ENCODE measurements at regions of chr9 and their contacts with region 1.

Region 1: GRCh38 chr9:11713077-11713476 is 980.1 kb upstream of the TYRP1 start:
- DNase-seq: no peak
- H3K4me3 ChIP-seq: no peak overlapping the region
- H3K27ac ChIP-seq: no peak overlapping the region
- H3K4me1 ChIP-seq: no peaks in the 10 kb centered on the region
- H3K27me3 ChIP-seq: no peaks in the 10 kb centered on the region
- CTCF ChIP-seq: no peak
- EP300 ChIP-seq: no peak
- POLR2A ChIP-seq: no peak

Region 2: GRCh38 chr9:11676821-11677220 is 36.3 kb before region 1 on chr9:
- intact Hi-C with region 1: loop called in 1 of 4 experiments (anchors 1 kb)
- DNase-seq: no peak
- H3K4me3 ChIP-seq: no peak overlapping the region
- H3K27ac ChIP-seq: no peak overlapping the region
- H3K4me1 ChIP-seq: no peaks in the 10 kb centered on the region
- H3K27me3 ChIP-seq: no peaks in the 10 kb centered on the region
- CTCF ChIP-seq: no peak
- EP300 ChIP-seq: no peak
- POLR2A ChIP-seq: no peak

Region 3: GRCh38 chr9:11735391-11735790 is 22.3 kb after region 1 on chr9:
- intact Hi-C with region 1: no loop called
- DNase-seq: no peak
- H3K4me3 ChIP-seq: no peak overlapping the region
- H3K27ac ChIP-seq: no peak overlapping the region
- H3K4me1 ChIP-seq: no peaks in the 10 kb centered on the region
- H3K27me3 ChIP-seq: no peaks in the 10 kb centered on the region
- CTCF ChIP-seq: no peak
- EP300 ChIP-seq: no peak
- POLR2A ChIP-seq: no peak

Region 4: GRCh38 chr9:11868795-11869194 is 155.7 kb after region 1 on chr9:
- intact Hi-C with region 1: no loop called
- DNase-seq: no peak
- H3K4me3 ChIP-seq: no peak overlapping the region
- H3K27ac ChIP-seq: no peak overlapping the region
- H3K4me1 ChIP-seq: no peaks in the 10 kb centered on the region
- H3K27me3 ChIP-seq: no peaks in the 10 kb centered on the region
- CTCF ChIP-seq: no peak
- EP300 ChIP-seq: no peak
- POLR2A ChIP-seq: no peak

Measured in ovary (tissue), 10 donors.